AG04449 (cell line): ENCODE measurements at regions of chr16 and their contacts with region 1.

Region 1: GRCh38 chr16:10957771-10958486 is 13.6 kb downstream of the CLEC16A start:
- DNase-seq: no peak
- H3K4me3 ChIP-seq: no peak overlapping the region
- CTCF ChIP-seq: no peak

Region 2: DNA sequence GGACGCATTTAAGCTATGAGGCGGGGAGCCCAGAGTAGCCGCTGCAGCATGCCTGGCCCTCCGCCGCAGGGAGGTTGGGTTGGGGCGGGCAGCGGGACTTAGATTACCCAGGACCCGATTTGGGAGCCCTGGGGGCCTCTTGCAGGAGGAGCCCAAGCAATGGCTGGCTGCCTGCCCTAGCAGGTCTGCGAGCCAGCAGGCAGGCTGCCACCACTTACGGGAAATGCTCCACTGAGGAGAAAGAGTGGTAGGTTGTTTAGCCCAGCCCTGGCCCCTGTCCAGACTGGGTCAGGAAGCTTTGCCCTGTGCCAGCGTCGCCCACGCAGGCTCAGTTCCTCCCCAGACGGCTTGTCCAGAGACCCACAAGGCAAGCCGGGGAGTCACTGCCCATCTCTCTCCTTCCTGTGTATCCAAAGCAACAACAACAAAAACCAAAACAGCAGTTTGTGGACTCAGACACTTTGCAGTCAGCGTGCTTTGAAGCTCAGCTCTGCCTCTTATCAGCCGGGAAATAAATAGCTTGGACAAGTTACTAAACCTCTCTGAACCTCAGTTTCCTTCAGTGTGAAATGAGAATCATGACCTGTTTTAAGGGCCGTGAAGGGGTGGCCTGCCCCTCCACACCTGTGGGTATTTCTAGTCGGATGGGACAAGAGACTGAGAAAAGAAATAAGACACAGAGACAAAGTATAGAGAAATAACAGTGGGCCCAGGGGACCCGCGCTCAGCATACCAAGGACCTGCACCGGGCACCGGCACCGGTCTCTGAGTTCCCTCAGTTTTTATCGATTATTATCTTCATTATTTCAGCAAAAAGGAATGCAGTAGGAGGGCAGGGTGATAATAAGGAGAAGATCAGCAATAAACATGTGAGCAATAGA is 128.8 kb before region 1 on chr16:
- CTCF ChIA-PET with region 1: no interaction called
- POLR2A ChIA-PET with region 1: no interaction called
- DNase-seq: no peak
- H3K4me3 ChIP-seq: no peak overlapping the region
- CTCF ChIP-seq: no peak

Region 3: DNA sequence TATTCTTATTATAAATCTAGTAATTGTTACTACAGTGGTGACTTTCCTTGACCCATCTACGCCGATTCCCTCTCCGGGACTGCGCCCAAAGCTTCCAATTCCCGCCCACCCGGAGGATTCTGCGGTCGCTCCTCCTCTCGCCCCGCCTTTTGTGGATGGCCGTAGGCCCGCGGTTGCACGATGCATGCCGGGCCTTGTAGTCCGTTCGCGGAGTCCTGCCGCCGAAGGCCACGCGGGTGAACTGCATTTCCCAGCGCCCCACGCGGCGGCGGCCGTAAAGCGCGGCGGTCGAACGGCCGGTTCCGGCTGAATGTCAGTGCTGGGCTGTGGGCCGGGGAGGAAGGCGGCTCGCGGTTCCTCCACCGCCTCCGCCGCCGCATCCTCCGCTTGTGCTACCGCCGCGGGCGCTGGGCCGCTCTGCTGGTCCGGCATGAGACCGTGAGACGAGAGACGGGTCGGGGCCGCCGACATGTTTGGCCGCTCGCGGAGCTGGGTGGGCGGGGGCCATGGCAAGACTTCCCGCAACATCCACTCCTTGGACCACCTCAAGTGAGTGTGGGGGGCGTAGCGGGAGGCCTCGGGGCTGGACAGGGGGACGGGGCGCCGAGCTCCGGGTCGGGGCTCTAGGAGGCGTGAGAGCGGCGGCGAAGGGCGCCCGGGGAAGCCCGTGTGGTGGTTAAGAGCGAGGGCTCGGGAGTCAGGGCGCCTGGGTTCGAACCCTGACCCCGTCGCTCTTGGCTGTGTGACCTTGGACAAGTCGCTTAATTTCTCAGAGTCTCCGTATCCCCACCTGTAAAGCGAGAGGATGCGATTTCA is 13.5 kb before region 1 on chr16 and contains the start of gene CLEC16A:
- CTCF ChIA-PET with region 1: interaction called, 215 read pairs
- POLR2A ChIA-PET with region 1: no interaction called
- DNase-seq: peak; percentile 70
- H3K4me3 ChIP-seq: peak within 1 kb of the TSS; percentile 86
- CTCF ChIP-seq: no peak